Esophagus muscularis mucosa (tissue), 4 donors: ENCODE measurements at regions of chr7 and their contacts with region 1.

Region 1: DNA sequence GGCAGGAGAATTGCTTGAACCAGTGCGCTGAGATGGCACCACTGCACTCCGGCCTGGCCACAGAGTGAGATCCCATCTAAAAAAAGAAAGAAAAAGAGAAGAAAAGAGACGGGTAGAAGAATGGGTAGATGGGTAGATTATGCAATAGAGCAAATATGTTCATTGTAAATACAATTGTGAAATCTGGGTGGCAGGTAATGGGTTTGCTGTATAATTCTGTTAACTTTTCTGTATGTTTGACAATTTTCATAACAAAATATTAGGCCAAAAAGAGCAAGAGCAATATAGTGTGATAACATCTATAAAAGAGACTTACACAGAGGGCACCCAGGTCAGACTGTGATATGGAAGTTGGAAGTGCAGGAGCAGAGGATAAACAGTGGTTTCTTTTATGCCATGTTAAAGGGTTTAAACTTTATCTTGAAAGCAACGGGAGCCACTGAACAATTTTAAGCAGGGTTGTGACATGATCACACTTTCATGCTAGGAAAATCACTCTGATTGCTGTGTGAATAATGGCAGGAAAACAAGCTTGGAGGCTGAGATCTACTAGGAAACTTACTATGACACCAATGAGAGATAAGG is 6.7 kb upstream of the COL28A1 start:
- DNase-seq: no peak
- H3K4me3 ChIP-seq: no peak overlapping the region
- H3K27ac ChIP-seq: no peak overlapping the region
- H3K4me1 ChIP-seq: no peaks in the 10 kb centered on the region
- H3K27me3 ChIP-seq: no peaks in the 10 kb centered on the region
- CTCF ChIP-seq: no peak
- EP300 ChIP-seq: no peak
- POLR2A ChIP-seq: no peak

Region 2: GRCh38 chr7:7103343-7104313 is 438.7 kb before region 1 on chr7:
- intact Hi-C with region 1: loop called (anchors 5 kb)
- DNase-seq: no peak
- H3K4me3 ChIP-seq: no peak overlapping the region
- H3K27ac ChIP-seq: no peak overlapping the region
- H3K4me1 ChIP-seq: peaks cover 14 to 15% (median 14%) of the 10 kb centered on the region in 4 donors
- H3K27me3 ChIP-seq: no peaks in the 10 kb centered on the region
- CTCF ChIP-seq: peak; percentile 62 to 66 (median 62)
- EP300 ChIP-seq: no peak
- POLR2A ChIP-seq: no peak

Region 3: DNA sequence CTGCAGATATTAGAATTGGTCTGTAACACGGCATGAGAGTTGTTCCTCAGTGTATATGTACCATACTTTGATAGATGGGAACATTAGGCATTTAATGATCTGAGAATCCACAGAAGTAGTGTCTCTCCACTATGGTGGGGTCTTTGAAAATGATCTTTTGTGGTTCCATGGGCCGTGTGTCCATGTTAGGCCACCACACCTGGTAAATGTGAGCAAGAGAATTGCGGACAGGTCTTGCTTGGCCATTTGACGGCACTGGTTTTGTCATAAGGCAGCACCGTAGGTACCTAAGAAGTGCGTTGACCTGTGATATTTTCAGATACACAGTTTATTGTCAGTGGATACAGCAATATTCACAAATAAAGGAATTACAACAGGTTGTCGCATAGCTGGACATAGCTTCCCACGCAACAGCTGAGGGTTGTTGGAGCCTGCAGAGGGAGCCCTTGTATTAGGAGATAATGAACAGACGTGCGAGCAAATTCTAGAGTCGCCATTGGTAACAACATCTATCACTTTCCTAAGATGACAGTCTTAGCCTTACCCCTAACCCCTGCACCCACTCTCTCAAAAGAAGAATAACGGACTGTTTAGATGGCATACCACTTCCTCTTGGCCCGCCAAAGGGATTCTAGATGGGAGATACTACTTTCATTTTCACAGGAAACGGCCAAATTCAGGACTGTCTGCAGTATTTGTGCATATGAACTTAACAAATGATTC is 118.0 kb before region 1 on chr7:
- intact Hi-C with region 1: loop called (anchors 5 kb)
- DNase-seq: no peak
- H3K4me3 ChIP-seq: peak overlapping the region; percentile 41 to 61 (median 53)
- H3K27ac ChIP-seq: no peak overlapping the region
- H3K4me1 ChIP-seq: peaks cover 0 to 5% (median 5%) of the 10 kb centered on the region in 4 donors
- H3K27me3 ChIP-seq: no peaks in the 10 kb centered on the region
- CTCF ChIP-seq: peak; percentile 67 to 70 (median 69)
- EP300 ChIP-seq: no peak
- POLR2A ChIP-seq: no peak

Region 4: DNA sequence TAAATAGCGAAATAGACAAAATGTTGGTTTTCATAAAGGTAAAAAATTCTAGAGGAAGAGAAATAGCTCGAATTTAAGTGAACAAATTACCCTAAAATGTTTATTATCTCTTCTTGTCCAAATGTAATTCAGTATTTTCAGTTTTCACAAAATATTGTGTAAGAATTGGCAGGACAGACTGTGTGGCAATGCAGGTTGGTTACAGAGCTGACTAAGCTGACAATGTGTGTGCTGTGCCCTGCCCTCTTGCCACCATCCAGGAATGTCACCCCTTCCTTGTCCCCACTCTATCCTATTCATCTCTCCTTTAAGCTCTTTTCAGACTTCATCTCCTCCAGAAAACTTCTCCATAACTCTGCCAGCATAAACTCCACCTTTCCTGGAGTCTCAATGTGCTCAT is 52.8 kb before region 1 on chr7:
- intact Hi-C with region 1: no loop called
- DNase-seq: no peak
- H3K4me3 ChIP-seq: no peak overlapping the region
- H3K27ac ChIP-seq: no peak overlapping the region
- H3K4me1 ChIP-seq: no peaks in the 10 kb centered on the region
- H3K27me3 ChIP-seq: no peaks in the 10 kb centered on the region
- CTCF ChIP-seq: no peak
- EP300 ChIP-seq: no peak
- POLR2A ChIP-seq: no peak